ENCODE measurements at regions of chr1 and their contacts with region 1.

Region 1: GRCh38 chr1:18326211-18326897 is 154.4 kb upstream of the KLHDC7A start:
- DNase-seq: no peak
- H3K4me3 ChIP-seq: no peak overlapping the region
- CTCF ChIP-seq: no peak

Region 2: DNA sequence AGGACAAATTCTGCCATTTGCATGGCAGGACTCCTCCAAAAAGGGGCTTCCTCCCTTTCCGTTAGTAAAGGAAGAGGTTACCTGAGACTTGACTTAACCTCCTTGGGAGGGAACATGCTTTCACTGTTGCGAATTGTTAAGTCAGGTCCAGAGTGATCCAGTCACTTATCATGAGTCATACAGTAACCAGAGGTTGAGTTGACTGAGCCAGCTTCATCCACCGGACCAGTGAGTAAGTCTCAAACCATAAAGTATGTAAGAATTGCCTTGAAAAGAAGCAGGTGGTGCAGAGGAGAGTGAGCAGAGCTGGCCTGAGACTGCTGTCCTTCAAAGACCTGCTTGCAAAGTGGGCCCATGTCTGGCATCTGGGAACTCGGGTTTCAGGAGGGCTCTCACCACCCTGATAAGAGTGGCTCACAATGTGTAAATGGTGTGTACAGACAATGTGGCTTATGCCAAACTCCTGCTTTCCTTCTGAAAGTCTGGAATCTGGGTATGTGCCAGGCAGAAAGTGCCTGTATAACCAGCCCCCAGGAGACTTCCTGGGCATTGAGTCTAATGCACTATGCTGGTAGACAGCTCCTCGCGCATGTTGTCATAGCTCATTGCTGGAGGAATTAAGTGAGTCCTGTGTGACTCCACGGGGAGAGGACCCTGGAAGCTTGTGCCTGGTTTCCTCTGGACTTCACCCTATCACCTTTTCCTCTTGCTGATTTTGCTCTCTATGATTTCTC is 70.1 kb after region 1 on chr1:
- in situ Hi-C with region 1: loop called (anchors 5 kb)
- DNase-seq: no peak
- H3K4me3 ChIP-seq: no peak overlapping the region
- CTCF ChIP-seq: no peak

Region 3: DNA sequence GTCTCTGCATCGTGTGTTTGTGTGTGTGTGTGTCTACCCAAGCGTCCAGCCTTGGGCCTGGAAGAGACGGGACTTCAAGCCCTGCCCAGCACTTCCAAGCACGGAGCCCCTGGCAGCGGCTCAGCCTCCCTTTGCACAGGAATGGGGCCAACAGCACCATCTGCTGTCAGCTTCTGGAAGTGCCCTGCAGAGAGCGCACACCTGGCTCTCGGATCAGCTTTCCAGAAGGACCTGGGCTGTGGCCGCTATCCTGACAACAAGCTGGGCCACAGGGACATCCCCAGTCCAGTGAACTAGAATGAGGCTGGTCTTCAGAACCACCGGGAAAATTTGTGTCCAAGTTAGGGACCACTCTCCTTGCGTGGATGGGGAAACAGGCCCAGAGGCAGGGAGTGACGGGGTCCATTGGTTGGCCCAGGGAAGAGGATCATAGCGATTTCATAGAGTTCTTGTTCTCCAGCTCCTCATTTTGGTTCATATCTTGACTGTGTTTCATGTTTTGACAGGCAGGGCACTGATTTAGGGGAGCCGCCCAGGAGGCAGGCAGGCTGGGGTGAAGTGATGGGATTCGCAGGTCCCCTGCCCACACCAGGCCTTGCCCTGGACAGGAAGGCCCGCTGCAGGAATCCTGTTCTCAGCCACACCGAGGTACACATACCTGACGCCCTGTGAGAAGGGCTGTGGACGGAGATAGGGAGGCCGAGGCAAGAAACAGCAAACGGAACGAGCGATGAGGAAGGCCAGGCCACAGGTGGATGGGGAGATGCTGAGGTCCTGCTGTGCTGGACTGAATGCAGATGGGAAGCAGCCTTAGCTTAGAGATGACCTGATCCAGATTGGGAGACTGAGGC is 494.7 kb after region 1 on chr1:
- in situ Hi-C with region 1: no loop called
- DNase-seq: peak; percentile 47
- H3K4me3 ChIP-seq: no peak overlapping the region
- CTCF ChIP-seq: peak; percentile 97

Measured in astrocyte of the cerebellum (primary cell).